ENCODE measurements at regions of chr17 and their contacts with region 1.

Region 1: GRCh38 chr17:43524945-43525575 is 21.1 kb downstream of the ETV4 start:
- DNase-seq: no peak
- H3K4me3 ChIP-seq: no peak overlapping the region
- H3K27ac ChIP-seq: peak overlapping the region; percentile 10; the same call in 1 of the 2 replicates
- H3K4me1 ChIP-seq: peaks cover 6% of the 10 kb centered on the region
- H3K27me3 ChIP-seq: no peaks in the 10 kb centered on the region
- CTCF ChIP-seq: no peak

Region 2: DNA sequence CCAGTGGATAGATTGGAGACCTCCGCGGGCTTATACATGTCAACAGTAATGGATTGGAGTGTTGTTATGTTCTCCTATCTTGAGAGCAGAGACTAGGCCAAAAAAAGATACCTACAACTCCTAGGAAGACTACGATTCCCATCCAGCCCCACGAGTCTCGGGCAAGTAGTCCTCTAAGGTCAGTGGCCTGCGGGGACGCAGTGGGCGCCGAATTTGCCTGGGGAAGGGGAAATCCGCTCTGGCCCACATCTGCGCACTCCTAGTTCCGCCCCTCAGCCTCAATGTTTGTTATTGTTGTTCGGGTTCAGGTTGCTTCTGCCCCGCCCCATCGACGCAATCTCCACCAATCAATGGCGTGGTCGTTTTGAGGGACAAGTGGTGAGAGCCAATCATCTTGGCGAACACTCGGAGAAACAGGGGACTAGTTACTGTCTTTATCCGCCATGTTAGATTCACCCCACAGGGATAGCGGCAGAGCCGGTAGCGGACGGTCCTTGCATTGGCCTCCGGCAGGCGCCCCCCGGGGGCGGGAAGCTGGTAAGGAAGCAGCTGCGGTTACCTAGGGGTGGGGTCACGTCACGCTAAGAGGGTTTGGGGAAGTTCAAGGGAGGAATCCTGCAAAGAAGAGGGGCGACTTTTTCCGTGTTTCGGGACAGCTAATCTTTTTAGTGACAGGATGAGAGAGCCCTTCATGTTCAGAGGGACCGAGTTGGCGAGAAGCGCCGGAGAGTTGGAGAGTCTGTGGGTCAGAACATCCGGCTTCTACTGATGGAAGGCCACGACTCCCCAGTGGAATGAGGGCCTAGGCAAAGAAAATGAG is 354.1 kb before region 1 on chr17 and contains the start of gene NBR1:
- CTCF ChIA-PET with region 1: no interaction called
- POLR2A ChIA-PET with region 1: interaction called, 10 read pairs
- intact Hi-C with region 1: no loop called
- DNase-seq: peak; percentile 93
- H3K4me3 ChIP-seq: peak within 1 kb of the TSS; percentile 71
- H3K27ac ChIP-seq: peak within 1 kb of the TSS; percentile 95
- H3K4me1 ChIP-seq: peaks cover 14% of the 10 kb centered on the region
- H3K27me3 ChIP-seq: no peaks in the 10 kb centered on the region
- CTCF ChIP-seq: no peak
- total RNA-seq, gene NBR1: 80.5 and 93.7 TPM in 2 replicates

Region 3: DNA sequence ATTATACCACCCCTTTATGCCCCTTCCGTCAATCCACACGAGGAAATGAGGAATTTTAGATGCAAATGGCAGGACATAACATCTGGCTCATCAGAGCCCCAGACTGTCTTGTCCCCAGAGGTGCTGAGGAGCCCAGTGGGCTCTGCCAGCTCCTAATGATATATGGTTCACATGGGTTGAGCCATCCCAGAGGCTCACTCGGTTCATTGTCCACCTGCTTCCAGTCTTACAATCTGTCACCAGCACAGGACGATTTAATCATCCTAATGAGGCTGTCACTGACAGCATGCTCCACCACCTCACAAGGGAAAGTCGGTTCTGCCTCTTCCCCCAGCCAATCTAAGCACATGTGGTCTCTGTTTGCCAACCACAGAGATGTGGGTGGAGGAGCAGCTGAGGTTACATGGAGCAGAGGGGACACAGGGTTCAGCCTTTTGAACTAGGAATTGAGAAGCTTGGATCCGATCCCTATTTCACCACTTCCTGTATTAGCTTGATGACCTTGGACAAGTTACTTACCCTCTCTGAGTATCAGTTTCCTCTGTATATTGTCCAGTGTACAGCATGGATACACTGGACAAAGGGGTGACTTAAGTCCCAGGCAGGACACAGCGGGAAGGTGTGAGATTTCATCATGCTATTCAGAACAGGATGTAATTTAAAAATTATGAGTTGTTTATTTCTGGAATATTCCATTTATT is 68.2 kb before region 1 on chr17:
- CTCF ChIA-PET with region 1: no interaction called
- POLR2A ChIA-PET with region 1: no interaction called
- intact Hi-C with region 1: no loop called
- DNase-seq: no peak
- H3K4me3 ChIP-seq: no peak overlapping the region
- H3K27ac ChIP-seq: no peak overlapping the region
- H3K4me1 ChIP-seq: peaks cover 25% of the 10 kb centered on the region
- H3K27me3 ChIP-seq: no peaks in the 10 kb centered on the region
- CTCF ChIP-seq: no peak

Region 4: GRCh38 chr17:43490621-43491020 is 34.4 kb before region 1 on chr17:
- CTCF ChIA-PET with region 1: no interaction called
- POLR2A ChIA-PET with region 1: no interaction called
- intact Hi-C with region 1: no loop called
- DNase-seq: no peak
- H3K4me3 ChIP-seq: no peak overlapping the region
- H3K27ac ChIP-seq: no peak overlapping the region
- H3K4me1 ChIP-seq: peaks cover 6% of the 10 kb centered on the region
- H3K27me3 ChIP-seq: no peaks in the 10 kb centered on the region
- CTCF ChIP-seq: no peak

Region 5: GRCh38 chr17:43694077-43694870 is 169.2 kb after region 1 on chr17:
- CTCF ChIA-PET with region 1: no interaction called
- POLR2A ChIA-PET with region 1: no interaction called
- intact Hi-C with region 1: loop called (anchors 5 kb)
- DNase-seq: peak; percentile 68 to 72
- H3K4me3 ChIP-seq: no peak overlapping the region
- H3K27ac ChIP-seq: no peak overlapping the region
- H3K4me1 ChIP-seq: no peaks in the 10 kb centered on the region
- H3K27me3 ChIP-seq: no peaks in the 10 kb centered on the region
- CTCF ChIP-seq: peak; percentile 97

Region 6: GRCh38 chr17:43760254-43760852 is 235.3 kb after region 1 on chr17:
- CTCF ChIA-PET with region 1: no interaction called
- POLR2A ChIA-PET with region 1: no interaction called
- intact Hi-C with region 1: loop called (anchors 5 kb)
- DNase-seq: peak; percentile 77 to 92
- H3K4me3 ChIP-seq: no peak overlapping the region
- H3K27ac ChIP-seq: no peak overlapping the region
- H3K4me1 ChIP-seq: peaks cover 11% of the 10 kb centered on the region
- H3K27me3 ChIP-seq: no peaks in the 10 kb centered on the region
- CTCF ChIP-seq: peak; percentile 99

Region 7: GRCh38 chr17:44266402-44267164 is 741.5 kb after region 1 on chr17:
- CTCF ChIA-PET with region 1: no interaction called
- POLR2A ChIA-PET with region 1: no interaction called
- intact Hi-C with region 1: no loop called
- DNase-seq: no peak
- H3K4me3 ChIP-seq: no peak overlapping the region
- H3K27ac ChIP-seq: no peak overlapping the region
- H3K4me1 ChIP-seq: no peaks in the 10 kb centered on the region
- H3K27me3 ChIP-seq: peaks cover 16% of the 10 kb centered on the region
- CTCF ChIP-seq: no peak

Measured in PC-9 (cell line).